ENCODE measurements at regions of chr9 and their contacts with region 1.

Region 1: DNA sequence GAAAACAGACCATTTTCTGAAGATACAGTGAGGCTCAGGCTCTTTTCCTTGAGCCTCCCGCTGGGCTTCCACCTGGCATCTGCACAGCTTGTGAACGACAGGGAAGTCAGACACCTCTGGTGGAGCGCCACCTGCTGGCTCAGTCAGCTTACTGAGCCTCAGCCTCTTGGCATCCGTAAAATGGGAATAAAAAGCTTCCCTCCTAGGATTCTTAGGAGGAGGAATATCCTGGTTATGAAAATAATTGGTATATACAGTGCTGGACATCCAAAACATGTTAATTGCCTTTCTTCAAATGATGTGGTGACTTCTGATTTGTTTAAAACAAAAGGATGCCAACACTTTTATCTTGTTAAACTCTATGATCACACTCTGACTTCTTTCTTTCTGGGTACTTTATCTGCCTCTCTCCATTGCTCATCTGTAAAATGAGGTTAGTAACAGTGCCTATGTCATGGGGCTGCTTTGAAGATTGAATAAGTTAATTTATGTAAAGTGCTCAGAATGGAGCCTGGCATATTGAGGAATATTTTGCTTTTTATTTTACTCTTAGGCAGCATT is 67.5 kb downstream of the MAMDC2 start:
- DNase-seq: peak; percentile 35
- ATAC-seq: peak; percentile 47
- H3K4me3 Mint-ChIP-seq: no peak overlapping the region
- H3K27ac Mint-ChIP-seq: no peak overlapping the region
- H3K4me1 Mint-ChIP-seq: peaks cover 8% of the 10 kb centered on the region
- H3K27me3 Mint-ChIP-seq: peaks cover 15% of the 10 kb centered on the region
- CTCF ChIP-seq: peak; percentile 63

Region 2: DNA sequence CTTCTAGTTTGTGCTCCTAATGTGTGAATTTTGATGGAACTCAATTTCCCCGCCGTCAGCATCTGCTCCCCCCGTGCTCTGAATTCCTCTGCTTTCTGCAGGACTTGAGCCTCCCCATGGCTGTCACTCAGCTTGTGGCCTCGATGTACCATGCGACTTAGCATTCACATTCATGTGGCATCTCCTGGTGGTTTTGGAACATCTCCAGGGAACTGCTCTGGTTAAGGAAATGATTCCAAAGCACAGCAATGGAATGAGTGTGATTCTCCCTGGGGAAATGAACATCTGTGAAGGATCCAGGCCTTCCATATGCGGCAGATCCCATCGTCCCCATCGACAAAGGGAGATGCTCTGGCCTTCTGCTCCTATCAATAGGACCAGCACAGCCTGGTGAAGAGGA is 667.1 kb before region 1 on chr9:
- CTCF ChIA-PET with region 1: no interaction called
- POLR2A ChIA-PET with region 1: no interaction called
- intact Hi-C with region 1: no loop called
- DNase-seq: no peak
- ATAC-seq: no peak
- H3K4me3 Mint-ChIP-seq: no peak overlapping the region
- H3K27ac Mint-ChIP-seq: no peak overlapping the region
- H3K4me1 Mint-ChIP-seq: no peaks in the 10 kb centered on the region
- H3K27me3 Mint-ChIP-seq: peaks cover 5% of the 10 kb centered on the region
- CTCF ChIP-seq: no peak

Region 3: GRCh38 chr9:69874301-69875060 is 236.6 kb before region 1 on chr9:
- CTCF ChIA-PET with region 1: no interaction called
- POLR2A ChIA-PET with region 1: no interaction called
- intact Hi-C with region 1: no loop called
- DNase-seq: no peak
- ATAC-seq: no peak
- H3K4me3 Mint-ChIP-seq: no peak overlapping the region
- H3K27ac Mint-ChIP-seq: no peak overlapping the region
- H3K4me1 Mint-ChIP-seq: no peaks in the 10 kb centered on the region
- H3K27me3 Mint-ChIP-seq: no peaks in the 10 kb centered on the region
- CTCF ChIP-seq: no peak

Region 4: DNA sequence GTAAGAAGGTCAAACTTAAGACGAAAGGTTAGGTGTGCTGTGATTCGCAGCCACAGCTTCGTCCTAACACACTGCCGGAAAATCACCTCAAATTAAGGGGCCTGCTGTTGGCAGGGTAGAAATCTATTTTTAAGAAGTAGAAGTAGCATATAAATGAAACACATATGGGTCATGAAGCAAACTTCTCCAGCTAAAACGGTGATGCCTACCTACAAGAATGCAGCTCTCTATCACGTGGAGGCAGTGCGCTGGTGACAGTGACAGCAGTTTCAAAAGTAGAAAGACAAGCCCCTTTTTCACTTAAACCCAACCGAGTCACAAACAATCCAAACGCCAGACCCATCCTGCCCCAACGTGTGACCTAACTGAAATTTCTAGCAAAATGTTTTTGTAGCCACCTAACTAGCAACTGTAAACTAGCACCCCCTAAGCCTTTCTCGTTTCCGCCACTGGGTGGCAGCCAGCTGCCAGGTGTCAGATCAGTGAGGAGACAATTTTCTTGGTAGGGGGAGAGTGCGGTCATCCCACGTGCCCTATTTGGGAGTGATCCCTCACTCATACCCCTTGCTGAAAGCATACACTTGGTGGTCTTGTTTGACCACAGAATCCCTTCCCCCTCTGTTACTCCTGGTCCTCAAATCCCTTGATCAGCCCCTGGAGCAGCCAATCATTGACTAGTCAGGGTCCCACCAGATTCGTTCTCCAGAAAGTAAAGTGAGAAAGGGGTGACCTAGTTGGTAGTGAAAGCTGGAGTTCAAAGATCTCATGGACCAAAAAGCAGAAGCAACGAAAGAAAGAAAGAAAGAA is 139.3 kb before region 1 on chr9:
- CTCF ChIA-PET with region 1: interaction called, 52 read pairs
- POLR2A ChIA-PET with region 1: no interaction called
- intact Hi-C with region 1: loop called (anchors 1 kb)
- DNase-seq: peak; percentile 17
- ATAC-seq: no peak
- H3K4me3 Mint-ChIP-seq: no peak overlapping the region
- H3K27ac Mint-ChIP-seq: no peak overlapping the region
- H3K4me1 Mint-ChIP-seq: no peaks in the 10 kb centered on the region
- H3K27me3 Mint-ChIP-seq: peaks cover 16% of the 10 kb centered on the region
- CTCF ChIP-seq: no peak

Region 5: GRCh38 chr9:70069704-70070103 is 41.4 kb before region 1 on chr9:
- CTCF ChIA-PET with region 1: no interaction called
- POLR2A ChIA-PET with region 1: no interaction called
- intact Hi-C with region 1: no loop called
- DNase-seq: no peak
- ATAC-seq: no peak
- H3K4me3 Mint-ChIP-seq: no peak overlapping the region
- H3K27ac Mint-ChIP-seq: no peak overlapping the region
- H3K4me1 Mint-ChIP-seq: no peaks in the 10 kb centered on the region
- H3K27me3 Mint-ChIP-seq: peaks cover 13% of the 10 kb centered on the region
- CTCF ChIP-seq: no peak

Region 6: DNA sequence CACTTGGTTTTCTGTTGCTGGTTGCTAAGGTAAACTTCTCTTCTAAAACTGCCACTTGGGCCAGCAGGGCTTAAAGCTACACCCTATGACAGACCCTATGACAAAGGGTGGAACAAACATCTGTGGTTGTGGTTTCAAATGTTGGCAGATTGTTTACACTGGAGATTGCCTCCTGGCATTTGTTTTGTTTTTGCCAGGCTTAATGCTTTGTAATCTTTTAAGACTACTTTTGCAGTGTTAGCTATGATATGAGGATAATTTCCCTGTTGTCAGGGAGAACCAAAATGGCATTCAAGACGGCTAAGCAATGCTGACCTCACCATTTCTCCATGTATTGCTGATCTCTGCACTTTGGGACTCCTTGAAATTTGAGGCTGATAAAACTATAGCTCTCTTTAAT is 17.2 kb before region 1 on chr9:
- CTCF ChIA-PET with region 1: interaction called, 18 read pairs
- POLR2A ChIA-PET with region 1: interaction called, 3 read pairs
- intact Hi-C with region 1: no loop called
- DNase-seq: no peak
- ATAC-seq: no peak
- H3K4me3 Mint-ChIP-seq: no peak overlapping the region
- H3K27ac Mint-ChIP-seq: no peak overlapping the region
- H3K4me1 Mint-ChIP-seq: no peaks in the 10 kb centered on the region
- H3K27me3 Mint-ChIP-seq: peaks cover 7% of the 10 kb centered on the region
- CTCF ChIP-seq: no peak

Region 7: DNA sequence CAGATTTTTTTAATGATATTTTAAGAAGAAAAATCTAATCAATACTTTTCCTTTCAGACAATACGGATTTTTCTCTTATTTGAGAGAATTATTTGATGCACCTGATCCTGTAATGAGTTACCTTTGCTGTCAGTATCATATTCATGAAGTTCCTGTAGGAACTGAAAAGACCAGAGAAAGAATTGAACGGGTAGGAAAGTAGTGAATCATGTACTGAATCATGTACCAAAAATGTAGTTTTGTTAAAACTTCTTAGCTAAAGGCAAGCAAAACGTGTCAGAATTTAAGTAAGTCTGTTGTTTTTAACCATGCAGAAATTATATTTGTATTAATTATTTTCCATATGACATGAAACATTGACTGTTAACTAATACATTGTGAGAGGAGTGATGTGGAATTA is 204.3 kb after region 1 on chr9:
- CTCF ChIA-PET with region 1: no interaction called
- POLR2A ChIA-PET with region 1: no interaction called
- intact Hi-C with region 1: no loop called
- DNase-seq: no peak
- ATAC-seq: no peak
- H3K4me3 Mint-ChIP-seq: no peak overlapping the region
- H3K27ac Mint-ChIP-seq: no peak overlapping the region
- H3K4me1 Mint-ChIP-seq: no peaks in the 10 kb centered on the region
- H3K27me3 Mint-ChIP-seq: no peaks in the 10 kb centered on the region
- CTCF ChIP-seq: no peak

Measured in activated B cell treated with CpG ODN at 0.5 μM for 24 hours (primary cell).